ENCODE measurements at regions of chr3 and their contacts with region 1.

Region 1: GRCh38 chr3:64462203-64462602 is 225.6 kb downstream of the ADAMTS9 start:
- DNase-seq: peak; percentile 12 to 61 (median 48)
- H3K4me3 ChIP-seq: peak overlapping the region in 1 of 7 experiments; percentile 59
- H3K27ac ChIP-seq: no peak overlapping the region
- H3K4me1 ChIP-seq: peaks cover 0 to 11% (median under 1%) of the 10 kb centered on the region in 4 experiments
- H3K27me3 ChIP-seq: peaks cover 2 to 77% (median 6%) of the 10 kb centered on the region in 5 experiments

Region 2: DNA sequence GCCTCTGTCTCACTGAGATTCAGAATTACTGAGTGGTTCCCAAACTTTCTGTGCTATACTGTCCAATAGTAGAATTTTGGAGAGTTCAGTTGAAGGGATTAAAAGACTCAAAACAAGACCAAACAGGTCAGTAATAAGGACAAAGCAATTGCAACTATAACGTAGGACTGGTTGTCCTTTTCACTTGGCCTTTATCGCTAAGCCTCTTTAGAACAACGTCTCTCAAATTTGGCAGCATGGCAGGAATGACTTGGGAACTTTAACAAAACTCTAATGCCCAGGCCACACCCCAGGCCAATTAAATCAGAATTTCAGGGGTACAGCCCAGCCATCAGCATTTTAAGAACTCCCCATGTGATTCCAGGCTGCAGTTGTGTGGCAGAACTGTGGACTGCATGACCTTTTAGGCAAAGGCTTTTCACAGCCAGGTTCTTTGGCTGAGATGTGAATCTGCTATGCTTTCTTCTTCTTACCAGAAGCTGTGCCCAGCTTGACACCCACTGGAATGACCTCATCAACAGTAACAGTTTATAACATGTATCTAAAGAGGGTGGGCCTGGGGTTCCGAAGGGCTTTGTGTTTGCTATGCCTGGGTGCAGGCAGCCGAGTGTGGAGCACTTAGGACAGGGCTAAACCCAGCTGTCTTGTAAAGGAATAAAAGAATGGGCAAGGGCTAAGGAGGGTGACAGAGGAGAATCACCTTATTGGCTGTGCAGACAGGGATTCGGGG is 10.8 kb before region 1 on chr3:
- CTCF ChIA-PET with region 1: interaction called, 11 read pairs
- POLR2A ChIA-PET with region 1: no interaction called
- DNase-seq: no peak
- H3K4me3 ChIP-seq: no peak overlapping the region
- H3K27ac ChIP-seq: no peak overlapping the region
- H3K4me1 ChIP-seq: no peaks in the 10 kb centered on the region
- H3K27me3 ChIP-seq: peaks cover 8 to 69% (median 13%) of the 10 kb centered on the region in 5 experiments

Region 3: DNA sequence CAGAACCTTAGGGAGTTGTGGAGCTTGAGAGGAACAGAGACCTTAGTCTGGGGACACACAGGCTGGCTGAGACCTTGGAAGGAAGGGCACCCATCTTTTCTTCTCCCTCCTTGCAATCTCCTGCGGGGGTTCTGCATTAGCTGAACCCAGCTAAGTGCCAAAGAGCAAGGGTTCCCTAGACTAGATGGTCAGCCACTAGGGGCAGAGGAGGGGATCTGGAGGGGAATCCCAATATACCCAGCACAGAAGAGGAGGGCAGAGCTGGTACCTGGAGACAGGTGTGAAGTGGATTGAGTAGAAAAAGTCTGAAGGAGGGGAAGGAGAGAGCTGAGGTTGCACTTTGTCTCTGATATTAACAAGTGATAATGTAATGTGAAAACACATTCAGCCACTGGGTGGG is 12.8 kb after region 1 on chr3:
- CTCF ChIA-PET with region 1: interaction called, 17 read pairs
- POLR2A ChIA-PET with region 1: no interaction called
- DNase-seq: no peak
- H3K4me3 ChIP-seq: no peak overlapping the region
- H3K27ac ChIP-seq: no peak overlapping the region
- H3K4me1 ChIP-seq: no peaks in the 10 kb centered on the region
- H3K27me3 ChIP-seq: peaks cover 8 to 53% (median 22%) of the 10 kb centered on the region in 5 experiments

Region 4: GRCh38 chr3:64484289-64484992 is 22.2 kb after region 1 on chr3:
- CTCF ChIA-PET with region 1: interaction called, 12 read pairs
- POLR2A ChIA-PET with region 1: no interaction called
- DNase-seq: peak; percentile 57 to 77 (median 70)
- H3K4me3 ChIP-seq: no peak overlapping the region
- H3K27ac ChIP-seq: no peak overlapping the region
- H3K4me1 ChIP-seq: no peaks in the 10 kb centered on the region
- H3K27me3 ChIP-seq: peaks cover 4 to 53% (median 18%) of the 10 kb centered on the region in 5 experiments

Region 5: DNA sequence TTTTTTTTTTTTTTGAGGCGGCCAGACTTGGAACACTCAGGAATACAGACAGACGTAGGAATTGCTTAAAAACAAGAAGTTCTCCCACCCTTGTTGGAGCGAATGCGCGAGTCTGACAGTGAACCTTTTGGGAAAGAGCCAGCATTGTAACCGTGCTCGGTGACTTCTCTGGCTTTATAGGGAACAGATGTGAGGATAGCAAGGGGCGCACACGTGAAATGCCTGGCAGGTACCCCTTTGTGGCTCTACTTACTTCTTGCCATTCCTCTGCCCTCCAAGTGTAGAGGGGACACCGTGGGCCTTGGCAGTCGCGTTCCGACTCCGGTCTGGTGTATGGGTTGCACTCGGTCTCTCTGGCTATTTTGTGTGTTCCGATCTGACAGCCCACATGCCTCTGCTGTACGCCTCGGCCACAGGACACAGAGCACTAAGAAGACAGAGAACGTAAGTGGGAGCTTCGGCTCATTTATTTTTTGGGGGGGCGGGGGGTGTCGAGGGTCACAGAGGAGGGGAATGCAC is 99.2 kb after region 1 on chr3:
- CTCF ChIA-PET with region 1: no interaction called
- POLR2A ChIA-PET with region 1: no interaction called
- DNase-seq: no peak
- H3K4me3 ChIP-seq: no peak overlapping the region
- H3K27ac ChIP-seq: no peak overlapping the region
- H3K4me1 ChIP-seq: no peaks in the 10 kb centered on the region
- H3K27me3 ChIP-seq: no peaks in the 10 kb centered on the region